Activated T-helper 2 cell treated with anti-CD3 and anti-CD28 coated beads, Interferon-gamma antibody, Interleukin-2, Interleukin-4, amounts not matched to agents 10 μg/mL and 5 μg/mL and 100 μg/mL, durations not matched to agents 14 hours and 24 hours and 36 hours (primary cell): ENCODE measurements at regions of chr11 and their contacts with region 1.

Region 1: DNA sequence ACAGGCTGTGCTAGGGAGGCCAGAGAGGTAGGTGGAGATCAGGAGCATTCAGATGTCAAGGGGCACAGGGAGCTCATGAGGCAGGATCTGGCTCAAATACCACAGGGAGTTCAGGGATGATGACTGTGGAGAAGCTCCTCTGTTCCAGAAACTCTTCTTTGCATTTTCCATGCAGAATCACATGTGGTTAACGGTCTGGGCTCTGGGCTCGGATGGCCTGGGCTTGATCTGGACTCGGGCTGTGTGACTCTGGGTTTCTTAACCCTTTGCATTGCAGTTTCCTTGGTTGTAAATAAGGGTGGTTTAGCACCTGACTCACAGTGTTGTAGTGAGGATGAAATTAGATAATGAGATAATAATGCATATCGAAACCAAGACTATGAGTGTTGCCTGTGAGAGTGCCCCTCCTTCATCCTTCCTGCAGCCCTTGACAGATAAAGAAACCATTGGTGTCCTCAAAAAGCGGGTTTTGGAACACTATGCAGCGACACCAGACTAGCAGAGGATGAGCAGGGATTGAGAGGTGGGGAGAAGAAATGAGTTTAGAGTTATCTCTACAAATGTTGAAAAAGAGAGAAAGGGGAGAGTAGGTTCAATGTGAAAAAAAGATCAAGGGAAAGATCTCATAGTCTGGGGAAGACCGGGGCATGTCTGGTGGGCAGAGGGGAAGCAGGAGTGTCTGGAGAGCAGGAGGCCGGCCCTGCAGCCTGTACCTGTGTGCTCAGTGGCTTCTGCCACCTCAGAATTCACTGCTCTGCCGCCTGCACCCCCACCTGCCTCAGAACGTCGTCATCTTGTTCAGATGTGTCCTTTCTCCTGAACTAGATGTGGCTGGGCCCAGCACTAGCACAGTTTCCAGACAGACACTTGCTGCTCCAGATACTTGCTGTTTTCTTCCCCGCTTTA is 197.8 kb upstream of the SORL1-AS1 start:
- DNase-seq: peak; percentile 12
- H3K4me3 Mint-ChIP-seq: peak overlapping the region; percentile 30
- H3K27ac Mint-ChIP-seq: no peak overlapping the region
- H3K4me1 Mint-ChIP-seq: peaks cover 24% of the 10 kb centered on the region
- H3K27me3 Mint-ChIP-seq: peaks cover 37% of the 10 kb centered on the region

Region 2: DNA sequence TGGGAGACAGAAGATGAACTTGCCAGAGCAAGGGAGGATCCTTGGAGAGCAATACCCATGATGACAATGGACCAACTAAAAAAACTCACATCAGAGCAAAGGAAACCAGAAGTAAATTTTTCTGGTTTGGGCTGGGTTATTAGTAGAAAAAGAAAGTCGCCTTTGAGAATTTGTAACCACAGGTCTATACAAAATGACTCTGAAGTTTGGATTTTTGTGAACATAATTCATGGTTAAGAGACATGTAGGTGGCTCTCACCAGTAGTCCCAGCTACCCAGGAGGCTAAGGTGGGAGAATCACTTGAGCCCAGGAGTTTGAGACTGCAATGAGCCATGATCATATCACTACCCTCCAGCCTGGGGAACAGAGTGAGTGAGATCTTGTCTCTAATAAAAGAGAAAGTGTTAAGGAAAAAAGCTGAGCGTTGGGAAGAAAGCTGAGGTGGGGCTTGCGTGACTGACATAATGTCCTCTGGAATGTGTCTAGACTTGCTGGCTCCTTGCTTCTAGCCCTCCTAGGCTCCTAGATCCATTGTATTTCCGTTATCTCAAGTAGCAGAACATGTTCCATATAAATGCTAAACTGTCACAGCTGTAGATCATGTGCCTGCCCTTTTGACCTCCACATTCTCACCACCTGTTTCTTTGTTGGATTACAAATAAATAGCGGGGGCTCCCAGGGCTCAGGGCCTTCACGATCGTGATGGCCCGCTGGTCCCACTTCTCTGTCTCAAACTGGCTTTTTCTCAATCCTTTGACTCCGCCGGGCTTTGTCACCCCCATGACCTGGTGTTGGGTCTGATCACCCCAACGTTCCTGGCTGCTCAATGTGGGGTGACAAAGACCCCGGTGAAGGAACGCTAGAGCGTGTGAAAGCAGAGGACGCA is 414.2 kb before region 1 on chr11:
- intact Hi-C with region 1: loop called (anchors 1 kb)
- DNase-seq: no peak
- H3K4me3 Mint-ChIP-seq: no peak overlapping the region
- H3K27ac Mint-ChIP-seq: peak overlapping the region; percentile 15
- H3K4me1 Mint-ChIP-seq: peaks cover 29% of the 10 kb centered on the region
- H3K27me3 Mint-ChIP-seq: peaks cover 23% of the 10 kb centered on the region

Region 3: DNA sequence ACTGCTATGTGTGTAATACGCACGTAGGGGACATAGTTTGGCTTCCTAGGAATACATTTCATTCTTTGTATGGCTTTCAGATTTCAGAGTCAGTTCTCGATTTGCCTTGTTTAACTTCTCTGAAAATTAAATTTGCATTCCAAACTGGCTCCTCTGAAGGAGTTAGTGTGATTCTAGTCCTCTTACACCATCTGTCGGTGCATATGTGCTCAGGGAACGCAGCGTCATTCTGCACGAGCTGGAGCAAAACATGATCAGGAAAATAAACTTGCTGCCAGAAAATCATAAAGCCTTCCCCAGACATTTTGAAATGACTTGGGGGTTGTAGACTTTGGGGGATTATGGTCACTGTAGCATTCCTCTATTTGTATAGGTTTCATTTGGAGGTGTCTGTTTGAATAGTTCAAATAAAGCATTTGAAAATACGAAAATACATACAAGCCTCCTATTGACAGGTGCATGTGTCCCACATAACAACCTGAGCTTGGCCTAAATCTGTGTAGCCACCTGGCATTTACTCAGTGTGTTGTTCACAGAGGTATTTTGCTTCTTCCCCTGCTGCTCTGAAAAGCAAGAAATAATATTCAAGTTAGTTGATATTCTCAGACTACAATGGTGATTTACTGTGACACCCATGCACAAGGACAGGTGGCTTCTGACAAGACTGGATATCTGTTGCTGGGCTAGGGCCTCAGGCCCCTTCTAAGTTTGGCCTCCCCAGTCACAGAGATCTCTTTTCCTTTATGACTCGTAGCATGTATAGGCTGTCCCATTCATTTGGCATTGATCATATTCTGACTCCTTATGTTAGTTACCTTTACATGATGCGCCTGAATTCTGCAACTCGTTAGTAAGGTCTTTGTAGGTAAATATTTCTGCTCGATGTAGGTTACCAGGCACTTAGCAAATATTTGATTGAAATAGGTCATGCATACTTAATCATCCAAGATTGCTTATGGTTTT is 116.2 kb before region 1 on chr11:
- intact Hi-C with region 1: no loop called
- DNase-seq: no peak
- H3K4me3 Mint-ChIP-seq: no peak overlapping the region
- H3K27ac Mint-ChIP-seq: no peak overlapping the region
- H3K4me1 Mint-ChIP-seq: peaks cover 18% of the 10 kb centered on the region
- H3K27me3 Mint-ChIP-seq: no peaks in the 10 kb centered on the region

Region 4: DNA sequence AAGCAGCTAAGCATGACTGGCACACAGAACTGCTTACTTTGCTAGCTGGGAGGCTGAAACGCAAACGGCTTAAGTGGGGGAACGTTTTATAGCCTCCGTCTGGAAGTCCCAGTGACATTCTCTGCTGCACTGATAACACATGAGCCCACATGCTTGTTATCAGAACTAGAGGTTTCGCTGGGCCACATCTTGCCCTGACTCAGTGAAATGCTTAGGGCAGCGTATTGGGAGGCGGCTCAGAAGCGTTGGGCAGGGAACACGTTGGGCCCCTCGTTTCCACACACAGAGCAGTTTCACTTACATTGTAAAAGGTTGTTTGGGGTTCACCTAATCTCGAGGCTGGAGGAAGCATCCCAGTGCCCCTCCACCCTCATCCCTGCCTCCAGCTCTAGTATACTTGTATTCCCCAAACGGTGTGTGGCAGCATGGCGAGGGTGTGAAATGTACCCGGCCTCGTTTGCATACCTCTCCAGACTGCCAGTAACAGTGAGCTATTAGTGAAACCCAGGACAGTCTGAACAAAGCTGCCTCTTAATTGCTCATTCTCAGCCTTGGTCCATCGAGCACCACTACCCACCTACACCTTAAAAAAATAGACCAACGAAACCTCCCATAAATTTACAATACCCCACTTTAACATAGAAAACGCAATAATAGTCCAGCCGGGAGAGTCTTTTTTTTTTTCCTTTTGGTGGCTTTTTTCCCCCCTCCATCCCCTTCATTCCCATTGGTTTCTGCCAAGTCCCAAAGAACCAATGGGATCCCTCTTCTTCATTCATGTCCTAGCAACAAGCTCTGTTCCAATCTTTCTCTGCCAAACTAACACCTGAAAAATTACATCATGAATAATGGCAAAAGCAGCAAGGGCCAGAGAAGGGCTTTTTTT is 20.9 kb after region 1 on chr11:
- intact Hi-C with region 1: no loop called
- DNase-seq: no peak
- H3K4me3 Mint-ChIP-seq: no peak overlapping the region
- H3K27ac Mint-ChIP-seq: no peak overlapping the region
- H3K4me1 Mint-ChIP-seq: no peaks in the 10 kb centered on the region
- H3K27me3 Mint-ChIP-seq: peaks cover 3% of the 10 kb centered on the region